ENCODE measurements at regions of chr2 and their contacts with region 1.

Region 1: GRCh38 chr2:143468341-143468888 is 339.2 kb downstream of the ARHGAP15 start:
- DNase-seq: no peak
- H3K4me3 Mint-ChIP-seq: no peak overlapping the region
- H3K27ac Mint-ChIP-seq: peak overlapping the region; percentile 81
- H3K4me1 Mint-ChIP-seq: peaks cover 18% of the 10 kb centered on the region
- H3K27me3 Mint-ChIP-seq: no peaks in the 10 kb centered on the region

Region 2: DNA sequence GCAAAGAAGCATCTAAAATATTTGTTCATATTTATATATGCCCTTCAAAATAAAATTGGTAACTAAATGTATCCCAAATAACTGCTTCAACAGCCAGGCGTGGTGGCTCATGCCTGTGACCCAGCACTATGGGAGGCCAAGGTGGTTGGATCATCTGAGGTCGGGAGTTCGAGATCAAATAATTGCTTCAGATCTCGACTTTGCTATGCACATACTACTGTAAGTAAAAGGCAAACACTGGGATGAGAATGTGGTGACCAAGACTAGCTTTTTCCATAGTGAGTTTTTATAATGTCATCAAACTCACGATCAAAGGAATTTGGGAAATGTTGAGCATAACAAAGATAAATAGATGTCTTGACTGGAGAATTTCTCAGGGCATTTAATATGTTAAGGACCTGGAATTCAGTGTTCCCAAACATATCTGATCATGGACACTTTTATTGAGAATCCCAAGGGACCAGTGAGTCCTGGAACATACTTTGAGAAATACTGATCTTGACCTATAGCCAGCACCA is 133.6 kb before region 1 on chr2:
- intact Hi-C with region 1: loop called (anchors 5 kb)
- DNase-seq: no peak
- H3K4me3 Mint-ChIP-seq: no peak overlapping the region
- H3K27ac Mint-ChIP-seq: no peak overlapping the region
- H3K4me1 Mint-ChIP-seq: peaks cover 14% of the 10 kb centered on the region
- H3K27me3 Mint-ChIP-seq: no peaks in the 10 kb centered on the region

Region 3: DNA sequence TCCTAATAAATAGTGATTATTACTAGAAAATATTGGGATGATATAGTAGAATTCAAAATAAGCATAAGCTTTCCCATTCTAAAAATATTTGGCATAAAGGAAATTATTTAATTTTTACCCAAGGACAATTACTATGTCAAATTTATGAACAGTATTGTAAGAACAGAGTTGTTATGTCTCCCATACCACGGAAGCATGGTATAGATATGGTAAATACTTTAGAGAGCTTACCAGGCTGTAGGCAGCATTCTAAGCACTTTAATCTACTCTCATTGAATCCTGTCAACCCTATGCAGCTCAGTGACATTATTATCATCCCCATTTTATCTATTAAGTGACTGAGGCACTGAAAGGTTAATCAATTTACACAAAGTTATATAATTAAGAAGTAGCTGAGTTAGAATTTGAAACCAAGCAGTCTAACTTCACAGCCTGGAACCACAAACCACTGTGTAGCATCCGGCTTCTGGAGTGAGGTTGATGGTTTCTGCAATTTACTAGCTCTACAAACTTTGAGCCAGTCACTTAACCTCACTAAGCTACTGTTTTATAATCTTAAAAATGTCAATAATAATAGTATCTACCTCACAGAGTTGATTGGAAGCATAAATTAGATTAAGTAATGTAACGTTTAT is 15.5 kb before region 1 on chr2:
- intact Hi-C with region 1: loop called (anchors 1 kb)
- DNase-seq: peak; percentile 80
- H3K4me3 Mint-ChIP-seq: no peak overlapping the region
- H3K27ac Mint-ChIP-seq: no peak overlapping the region
- H3K4me1 Mint-ChIP-seq: peaks cover 21% of the 10 kb centered on the region
- H3K27me3 Mint-ChIP-seq: no peaks in the 10 kb centered on the region

Region 4: DNA sequence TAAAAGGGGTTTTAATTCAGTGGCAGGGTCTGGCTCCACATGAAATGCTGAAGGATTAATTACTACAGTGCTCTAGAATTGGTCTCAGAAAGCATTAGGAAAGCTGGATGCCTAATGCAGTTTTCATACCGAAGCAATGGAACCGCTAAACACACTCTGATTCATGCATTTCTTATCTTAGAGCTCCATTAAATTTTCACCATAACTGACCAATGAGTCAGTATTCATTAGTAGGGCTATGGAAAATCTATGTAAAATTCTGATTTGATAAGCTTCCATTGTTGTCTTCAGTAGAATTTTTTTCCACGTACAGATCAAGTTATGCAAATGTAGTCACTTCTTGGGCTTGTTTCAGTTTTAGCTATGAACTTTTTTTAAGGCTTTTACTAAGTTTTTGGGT is 20.7 kb after region 1 on chr2:
- intact Hi-C with region 1: no loop called
- DNase-seq: no peak
- H3K4me3 Mint-ChIP-seq: no peak overlapping the region
- H3K27ac Mint-ChIP-seq: no peak overlapping the region
- H3K4me1 Mint-ChIP-seq: peaks cover 5% of the 10 kb centered on the region
- H3K27me3 Mint-ChIP-seq: no peaks in the 10 kb centered on the region

Region 5: GRCh38 chr2:143705108-143705686 is 236.8 kb after region 1 on chr2:
- intact Hi-C with region 1: loop called (anchors 1 kb)
- DNase-seq: no peak
- H3K4me3 Mint-ChIP-seq: no peak overlapping the region
- H3K27ac Mint-ChIP-seq: peak overlapping the region; percentile 25
- H3K4me1 Mint-ChIP-seq: peaks cover 16% of the 10 kb centered on the region
- H3K27me3 Mint-ChIP-seq: no peaks in the 10 kb centered on the region

Measured in activated CD4-positive, alpha-beta T cell treated with anti-CD3 and anti-CD28 coated beads, Interleukin-2, amount 10 ng/mL, durations not matched to agents 24 days and 14 days (primary cell).